HepG2 (cell line): ENCODE measurements at regions of chr16 and their contacts with region 1.

Region 1: DNA sequence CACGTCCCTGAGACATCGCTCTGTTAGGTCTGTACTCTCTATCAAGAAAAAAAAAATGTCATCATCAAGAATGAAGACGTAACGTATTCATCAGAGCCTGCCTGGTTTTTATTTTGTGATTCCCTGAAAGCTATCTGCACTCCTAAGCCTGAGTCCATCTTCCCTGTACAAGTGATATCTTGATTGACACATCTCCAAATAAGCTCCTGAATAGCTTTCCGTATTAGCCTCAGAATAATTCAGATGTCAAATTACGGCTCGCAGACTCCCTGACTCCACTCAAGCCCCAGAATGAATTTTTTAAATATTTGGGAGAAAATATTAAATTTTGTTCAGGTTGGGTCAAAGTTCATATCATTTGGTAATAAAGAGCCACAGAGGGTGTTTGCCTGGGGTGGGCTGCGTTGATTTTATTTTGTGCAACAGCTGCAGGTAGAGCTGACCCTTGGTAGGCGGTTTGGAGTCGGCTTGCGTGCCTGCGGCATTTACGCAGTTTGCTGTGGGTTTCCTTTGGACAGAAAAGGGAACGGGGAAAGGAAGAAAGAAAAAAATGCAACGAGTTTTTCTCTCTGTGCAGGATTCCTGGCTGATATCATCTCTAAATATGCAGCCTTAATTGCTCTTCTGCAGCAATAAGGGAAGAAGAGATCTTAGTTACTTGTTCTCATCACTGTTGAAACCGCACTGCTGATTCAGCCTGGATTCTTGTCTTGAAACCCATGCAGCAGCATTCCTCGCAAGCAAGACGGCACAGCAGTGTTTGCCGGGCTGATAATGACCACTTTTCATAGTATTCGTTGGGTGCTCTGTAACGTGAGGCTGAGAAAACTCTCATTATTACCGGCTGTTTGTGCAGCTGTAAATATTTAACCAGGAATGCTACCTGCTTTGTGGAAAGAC is 114.7 kb downstream of the IRX3 start:
- DNase-seq: peak; percentile 46
- ATAC-seq: no peak
- H3K4me3 ChIP-seq: peak overlapping the region in 1 of 3 experiments; percentile 49; a peak in 2 of 6 replicates
- H3K27ac ChIP-seq: peak overlapping the region; percentile 65
- H3K4me1 ChIP-seq: peaks cover 77% of the 10 kb centered on the region
- H3K27me3 ChIP-seq: no peaks in the 10 kb centered on the region
- CTCF ChIP-seq: no peak
- EP300 ChIP-seq: 0 out of 4 replicates have a peak, but pooled peaks of 1 of the 2 experiments have one; percentile 18
- POLR2A ChIP-seq: peak in 1 of 2 experiments; percentile 44; a peak in 1 of 4 replicates
- RAD21 ChIP-seq: no peak

Region 2: GRCh38 chr16:53249331-53249730 is 922.5 kb before region 1 on chr16:
- CTCF ChIA-PET with region 1: no interaction called
- POLR2A ChIA-PET with region 1: no interaction called
- in situ Hi-C with region 1: no loop called
- intact Hi-C with region 1: no loop called
- DNase-seq: no peak
- ATAC-seq: no peak
- H3K4me3 ChIP-seq: no peak overlapping the region
- H3K27ac ChIP-seq: no peak overlapping the region
- H3K4me1 ChIP-seq: no peaks in the 10 kb centered on the region
- H3K27me3 ChIP-seq: no peaks in the 10 kb centered on the region
- CTCF ChIP-seq: no peak
- EP300 ChIP-seq: no peak
- POLR2A ChIP-seq: no peak
- RAD21 ChIP-seq: no peak

Region 3: DNA sequence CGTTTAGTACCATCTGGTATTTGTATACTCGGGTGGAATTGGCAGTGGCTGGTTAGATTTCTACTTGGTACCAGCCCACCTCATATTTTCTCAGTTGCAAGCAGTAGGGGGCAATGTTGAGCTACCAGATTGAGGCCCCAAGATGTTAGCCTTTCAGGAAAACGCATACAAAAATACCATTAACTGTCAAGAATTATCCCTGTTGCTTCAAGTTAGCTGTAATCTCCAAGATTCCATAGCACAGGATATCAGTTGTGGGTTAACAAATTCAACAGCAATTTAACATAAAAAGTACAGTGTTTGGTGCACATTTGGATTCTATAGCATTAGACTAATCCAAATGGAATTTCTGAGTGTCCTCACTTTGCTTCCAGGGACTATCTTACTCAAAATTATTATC is 279.7 kb before region 1 on chr16:
- CTCF ChIA-PET with region 1: no interaction called
- POLR2A ChIA-PET with region 1: no interaction called
- in situ Hi-C with region 1: no loop called
- intact Hi-C with region 1: loop called (anchors 5 kb)
- DNase-seq: peak; percentile 61
- ATAC-seq: peak; percentile 87
- H3K4me3 ChIP-seq: no peak overlapping the region
- H3K27ac ChIP-seq: no peak overlapping the region
- H3K4me1 ChIP-seq: peaks cover 26% of the 10 kb centered on the region
- H3K27me3 ChIP-seq: no peaks in the 10 kb centered on the region
- CTCF ChIP-seq: peak; percentile 87
- EP300 ChIP-seq: 0 out of 4 replicates have a peak, but pooled peaks of 1 of the 2 experiments have one; percentile 38
- POLR2A ChIP-seq: no peak
- RAD21 ChIP-seq: peak; percentile 77

Region 4: GRCh38 chr16:54080524-54081008 is 91.3 kb before region 1 on chr16:
- CTCF ChIA-PET with region 1: no interaction called
- POLR2A ChIA-PET with region 1: interaction called, 8 read pairs
- in situ Hi-C with region 1: loop called (anchors 5 kb)
- intact Hi-C with region 1: loop called (anchors 1 kb)
- DNase-seq: peak; percentile 94
- ATAC-seq: peak; percentile 97
- H3K4me3 ChIP-seq: no peak overlapping the region; a peak in 1 of 6 replicates
- H3K27ac ChIP-seq: peak overlapping the region; percentile 67
- H3K4me1 ChIP-seq: peaks cover 56% of the 10 kb centered on the region
- H3K27me3 ChIP-seq: no peaks in the 10 kb centered on the region
- CTCF ChIP-seq: no peak
- EP300 ChIP-seq: peak; percentile 50 to 75; a peak in 3 of 4 replicates
- POLR2A ChIP-seq: no peak
- RAD21 ChIP-seq: no peak

Region 5: GRCh38 chr16:54266363-54266955 is 94.6 kb after region 1 on chr16:
- CTCF ChIA-PET with region 1: no interaction called
- POLR2A ChIA-PET with region 1: interaction called, 3 read pairs
- in situ Hi-C with region 1: no loop called
- intact Hi-C with region 1: loop called (anchors 5 kb)
- DNase-seq: peak; percentile 92
- ATAC-seq: peak; percentile 84
- H3K4me3 ChIP-seq: no peak overlapping the region
- H3K27ac ChIP-seq: peak overlapping the region; percentile 53
- H3K4me1 ChIP-seq: peaks cover 46% of the 10 kb centered on the region
- H3K27me3 ChIP-seq: no peaks in the 10 kb centered on the region
- CTCF ChIP-seq: no peak
- EP300 ChIP-seq: peak; percentile 73 to 84; a peak in 3 of 4 replicates
- POLR2A ChIP-seq: no peak
- RAD21 ChIP-seq: no peak